T-cell (primary cell): ENCODE measurements at regions of chr10 and their contacts with region 1.

Region 1: GRCh38 chr10:37976091-37976879 is at the start of gene ZNF25:
- DNase-seq: peak; percentile 90 to 99 (median 96)
- ATAC-seq: peak; percentile 89 to 92 (median 90)
- H3K4me3 ChIP-seq: peak within 1 kb of the TSS; percentile 52 to 77
- H3K4me3 Mint-ChIP-seq: peak within 1 kb of the TSS; percentile 77 to 92 (median 86)
- H3K27ac ChIP-seq: peak within 1 kb of the TSS; percentile 93
- H3K27ac Mint-ChIP-seq: peak within 1 kb of the TSS; percentile 93 to 97
- H3K4me1 ChIP-seq: peaks cover 8 to 11% of the 10 kb centered on the region in 2 experiments
- H3K4me1 Mint-ChIP-seq: peaks cover 26 to 31% (median 31%) of the 10 kb centered on the region in 3 donors
- H3K27me3 ChIP-seq: no peaks in the 10 kb centered on the region
- H3K27me3 Mint-ChIP-seq: no peaks in the 10 kb centered on the region
- total RNA-seq, gene ZNF25: 8.0 to 9.3 (median 8.3) TPM

Region 2: GRCh38 chr10:37623506-37623905 is 352.8 kb before region 1 on chr10:
- CTCF ChIA-PET with region 1: interaction called in 1 of 2 experiments, 10 read pairs
- POLR2A ChIA-PET with region 1: no interaction called
- DNase-seq: no peak
- ATAC-seq: no peak
- H3K4me3 ChIP-seq: no peak overlapping the region
- H3K4me3 Mint-ChIP-seq: no peak overlapping the region
- H3K27ac ChIP-seq: no peak overlapping the region
- H3K27ac Mint-ChIP-seq: no peak overlapping the region
- H3K4me1 ChIP-seq: no peaks in the 10 kb centered on the region
- H3K4me1 Mint-ChIP-seq: no peaks in the 10 kb centered on the region
- H3K27me3 ChIP-seq: no peaks in the 10 kb centered on the region
- H3K27me3 Mint-ChIP-seq: no peaks in the 10 kb centered on the region

Region 3: GRCh38 chr10:37960591-37961137 is 15.6 kb before region 1 on chr10:
- CTCF ChIA-PET with region 1: interaction called, 3 to 10 read pairs
- POLR2A ChIA-PET with region 1: no interaction called
- DNase-seq: no peak
- ATAC-seq: no peak
- H3K4me3 ChIP-seq: no peak overlapping the region
- H3K4me3 Mint-ChIP-seq: no peak overlapping the region
- H3K27ac ChIP-seq: no peak overlapping the region
- H3K27ac Mint-ChIP-seq: no peak overlapping the region
- H3K4me1 ChIP-seq: no peaks in the 10 kb centered on the region
- H3K4me1 Mint-ChIP-seq: no peaks in the 10 kb centered on the region
- H3K27me3 ChIP-seq: no peaks in the 10 kb centered on the region
- H3K27me3 Mint-ChIP-seq: no peaks in the 10 kb centered on the region

Region 4: DNA sequence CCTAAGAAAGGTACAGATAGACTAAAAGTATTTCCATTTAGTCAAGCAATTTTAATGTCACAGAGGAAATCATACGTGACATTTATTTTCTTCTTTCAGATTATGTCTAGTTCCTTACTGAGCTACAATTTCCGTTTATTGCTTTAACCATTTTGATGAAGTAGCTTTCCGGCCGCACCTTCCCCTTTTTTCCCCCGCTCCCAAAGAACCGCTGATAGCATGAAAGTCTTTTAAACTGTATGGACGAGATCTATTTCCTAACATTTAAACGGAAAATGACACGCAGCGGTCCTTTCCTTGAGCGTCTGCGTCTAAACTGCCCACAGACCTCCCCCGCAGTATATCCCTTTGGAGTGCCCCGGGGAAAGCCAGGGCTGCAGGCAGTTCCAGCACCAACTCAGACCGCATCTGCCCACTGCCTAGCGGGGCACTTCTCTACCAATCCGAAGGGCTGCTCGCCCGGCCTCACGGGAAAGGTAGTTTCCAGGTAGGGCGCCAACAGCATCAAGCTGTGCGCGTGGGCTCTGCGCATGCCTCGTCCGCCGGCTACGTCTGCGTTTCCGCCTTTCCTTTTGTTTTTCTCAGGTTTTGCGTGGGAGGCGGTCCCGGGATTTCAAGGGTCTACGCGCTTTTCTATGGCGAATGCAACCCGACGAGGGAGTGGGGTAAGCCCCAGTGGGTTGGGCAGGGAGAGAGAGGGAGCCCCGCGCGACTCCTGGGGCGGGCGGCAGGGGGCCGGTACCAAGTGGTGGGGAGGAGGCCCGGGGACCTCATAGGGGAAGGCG is 34.0 kb after region 1 on chr10 and contains the start of gene ZNF33A:
- CTCF ChIA-PET with region 1: interaction called, 4 to 43 read pairs
- POLR2A ChIA-PET with region 1: interaction called, 3 to 6 read pairs
- DNase-seq: peak; percentile 85 to 98 (median 90)
- ATAC-seq: peak; percentile 86 to 88 (median 88)
- H3K4me3 ChIP-seq: peak within 1 kb of the TSS; percentile 74 to 77
- H3K4me3 Mint-ChIP-seq: peak within 1 kb of the TSS; percentile 89 to 98 (median 94)
- H3K27ac ChIP-seq: peak within 1 kb of the TSS; percentile 99
- H3K27ac Mint-ChIP-seq: peak within 1 kb of the TSS; percentile 99
- H3K4me1 ChIP-seq: peaks cover 10 to 24% of the 10 kb centered on the region in 2 experiments
- H3K4me1 Mint-ChIP-seq: peaks cover 35 to 45% (median 43%) of the 10 kb centered on the region in 3 donors
- H3K27me3 ChIP-seq: no peaks in the 10 kb centered on the region
- H3K27me3 Mint-ChIP-seq: no peaks in the 10 kb centered on the region
- total RNA-seq, gene ZNF33A: 39.5 to 59.6 (median 55.0) TPM

Region 5: GRCh38 chr10:38094158-38094920 is 118.1 kb after region 1 on chr10 and contains the start of gene ZNF37A:
- CTCF ChIA-PET with region 1: interaction called, 3 to 10 read pairs
- POLR2A ChIA-PET with region 1: interaction called in 1 of 2 experiments, 3 read pairs
- DNase-seq: peak; percentile 77 to 96 (median 86)
- ATAC-seq: peak; percentile 97 to 98 (median 98)
- H3K4me3 ChIP-seq: peak within 1 kb of the TSS; percentile 85 to 88
- H3K4me3 Mint-ChIP-seq: peak within 1 kb of the TSS; percentile 83 to 92 (median 90)
- H3K27ac ChIP-seq: peak within 1 kb of the TSS; percentile 87
- H3K27ac Mint-ChIP-seq: peak within 1 kb of the TSS; percentile 84 to 94
- H3K4me1 ChIP-seq: peaks cover 4 to 24% of the 10 kb centered on the region in 2 experiments
- H3K4me1 Mint-ChIP-seq: peaks cover 34 to 39% (median 35%) of the 10 kb centered on the region in 3 donors
- H3K27me3 ChIP-seq: no peaks in the 10 kb centered on the region
- H3K27me3 Mint-ChIP-seq: no peaks in the 10 kb centered on the region
- total RNA-seq, gene ZNF37A: 15.9 to 23.8 (median 22.6) TPM

Region 6: GRCh38 chr10:38156416-38157269 is 180.4 kb after region 1 on chr10:
- CTCF ChIA-PET with region 1: no interaction called
- POLR2A ChIA-PET with region 1: no interaction called
- DNase-seq: no peak
- ATAC-seq: no peak
- H3K4me3 ChIP-seq: no peak overlapping the region
- H3K4me3 Mint-ChIP-seq: no peak overlapping the region
- H3K27ac ChIP-seq: no peak overlapping the region
- H3K27ac Mint-ChIP-seq: no peak overlapping the region
- H3K4me1 ChIP-seq: no peaks in the 10 kb centered on the region
- H3K4me1 Mint-ChIP-seq: no peaks in the 10 kb centered on the region
- H3K27me3 ChIP-seq: peaks cover 0 to 6% of the 10 kb centered on the region in 2 experiments
- H3K27me3 Mint-ChIP-seq: no peaks in the 10 kb centered on the region